ENCODE measurements at regions of chr1 and their contacts with region 1.

Region 1: GRCh38 chr1:19651141-19651737 is 7.1 kb downstream of the NBL1 start:
- DNase-seq: peak in 37 of 42 donors; percentile 35 to 82 (median 67)

Region 2: GRCh38 chr1:18913065-18913835 is 738.0 kb before region 1 on chr1:
- intact Hi-C with region 1: no loop called
- DNase-seq: peak; percentile 66 to 95 (median 88)

Region 3: DNA sequence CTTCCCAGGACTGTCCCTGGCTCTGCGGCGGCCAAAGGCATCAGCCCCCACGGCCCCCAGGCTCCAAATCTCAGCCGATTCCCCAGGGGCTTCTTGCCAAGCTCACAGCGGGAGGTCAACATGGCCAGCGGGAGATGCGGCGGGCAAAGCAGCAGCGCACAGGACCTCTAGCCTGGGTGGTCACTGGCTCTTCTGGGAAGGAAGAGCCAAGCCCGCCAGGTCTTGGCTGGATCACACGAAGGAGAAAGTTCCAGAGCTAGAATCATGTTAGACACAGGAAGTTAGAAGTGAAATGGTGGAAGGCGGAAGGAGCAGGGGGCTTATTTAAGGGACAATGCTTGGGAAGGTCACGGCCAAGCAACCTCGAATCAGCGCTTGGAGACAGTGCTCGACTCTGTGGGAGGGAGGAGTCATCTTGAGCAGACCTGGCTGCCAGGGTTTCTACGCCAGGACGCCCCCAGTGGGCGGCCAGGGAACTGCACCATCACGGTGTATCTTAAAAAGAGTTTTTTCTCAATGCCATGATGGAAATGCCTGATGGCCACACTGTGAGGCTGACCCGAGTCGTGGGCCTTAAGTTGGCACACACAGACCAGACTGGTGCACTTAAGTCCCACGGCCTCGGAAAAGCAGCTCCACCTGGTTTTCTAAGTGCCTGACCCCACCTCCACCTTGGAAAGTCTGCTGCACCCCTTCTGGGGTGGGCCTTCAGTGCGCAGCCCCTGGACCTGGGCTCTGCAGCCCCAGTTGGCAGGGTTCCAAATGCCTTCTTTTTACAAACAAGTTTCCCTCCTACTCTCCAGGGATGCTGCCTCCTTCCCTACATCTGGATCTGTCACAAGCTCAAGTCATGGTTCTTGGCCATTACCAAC is 309.8 kb before region 1 on chr1:
- intact Hi-C with region 1: loop called (anchors 5 kb)
- DNase-seq: peak; percentile 32 to 85 (median 71)

Region 4: DNA sequence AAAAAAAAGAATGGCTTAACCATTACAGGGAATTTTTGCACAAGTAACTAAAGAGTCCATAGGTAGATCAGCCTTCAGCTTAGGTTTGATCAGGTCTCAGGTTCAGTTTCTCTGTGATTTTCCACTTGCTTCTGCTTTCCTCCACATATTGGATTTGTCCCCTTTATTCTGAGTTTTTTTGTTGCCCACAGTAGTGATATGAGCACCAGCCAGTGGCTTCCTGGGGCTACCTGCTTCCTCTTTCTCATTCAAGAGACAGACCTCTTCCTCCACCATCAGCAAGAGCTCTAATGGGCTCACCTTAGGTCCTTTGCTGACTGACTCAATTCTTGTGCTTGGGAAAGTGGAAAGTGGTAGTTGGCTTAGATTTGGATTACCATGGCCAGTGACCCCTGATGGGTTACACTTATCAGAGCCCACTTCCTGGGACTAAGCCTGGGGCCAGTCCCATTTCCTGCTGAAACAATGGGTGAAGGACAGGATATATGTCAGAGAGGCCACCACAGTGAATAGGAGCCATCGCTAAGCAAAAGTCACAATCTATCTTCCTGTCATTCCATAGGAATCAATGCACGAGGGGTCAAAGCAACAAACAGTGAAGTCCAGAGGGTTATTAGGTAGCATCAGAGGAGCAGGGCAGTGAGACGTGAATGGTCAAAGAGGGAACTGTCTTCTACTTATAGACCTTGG is 285.0 kb after region 1 on chr1:
- intact Hi-C with region 1: no loop called
- DNase-seq: no peak